ENCODE measurements at regions of chr1 and their contacts with region 1.

Region 1: GRCh38 chr1:46724991-46725735 is 6.2 kb upstream of the EFCAB14 start:
- DNase-seq: peak in 8 of 10 donors; percentile 52 to 80 (median 68)
- H3K4me3 ChIP-seq: peak overlapping the region in 1 of 59 donors; percentile 13
- H3K27ac ChIP-seq: no peak overlapping the region
- H3K27me3 ChIP-seq: peaks cover 0 to 14% (median 0%) of the 10 kb centered on the region in 45 donors
- CTCF ChIP-seq: peak; percentile 52 to 89 (median 78)

Region 2: DNA sequence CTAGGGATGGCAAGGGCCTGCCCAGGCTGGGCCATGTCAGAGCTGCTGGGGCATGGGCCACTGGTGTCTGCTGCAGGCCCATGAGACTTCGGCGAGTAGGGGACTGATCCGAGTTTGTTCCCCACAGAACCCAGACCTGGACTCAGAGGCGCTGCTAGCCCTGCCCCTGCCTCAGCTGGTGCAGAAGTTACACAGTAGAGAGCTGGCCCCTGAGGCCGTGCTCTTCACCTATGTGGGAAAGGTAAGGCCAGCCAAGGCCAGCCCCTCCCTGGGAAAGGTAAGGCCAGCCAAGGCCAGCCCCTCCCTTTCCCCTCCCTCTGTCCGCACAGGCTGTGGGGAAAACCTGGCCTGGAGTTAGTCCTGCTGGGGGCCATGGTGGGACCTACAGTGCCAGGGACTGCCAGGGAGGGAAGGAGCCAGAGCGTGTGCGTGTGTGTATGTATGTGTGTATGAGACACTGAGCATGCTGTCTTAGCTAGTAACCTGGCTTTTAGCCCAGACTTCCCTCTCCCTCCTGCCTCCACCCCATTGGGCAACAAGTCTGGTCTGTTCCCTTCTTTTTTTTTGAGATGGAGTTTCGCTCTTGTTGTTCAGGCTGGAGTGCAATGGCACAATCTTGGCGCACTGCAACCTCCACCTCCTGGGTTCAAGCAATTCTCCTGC is 323.1 kb before region 1 on chr1:
- intact Hi-C with region 1: loop called in 1 of 2 experiments (anchors 5 kb)
- DNase-seq: peak; percentile 68 to 94 (median 88)
- H3K4me3 ChIP-seq: peak overlapping the region in 54 of 59 donors; percentile 1 to 54 (median 32)
- H3K27ac ChIP-seq: peak overlapping the region; percentile 34 to 97 (median 90)
- H3K27me3 ChIP-seq: no peaks in the 10 kb centered on the region
- CTCF ChIP-seq: peak in 16 of 56 donors; percentile 6 to 42 (median 19)

Region 3: DNA sequence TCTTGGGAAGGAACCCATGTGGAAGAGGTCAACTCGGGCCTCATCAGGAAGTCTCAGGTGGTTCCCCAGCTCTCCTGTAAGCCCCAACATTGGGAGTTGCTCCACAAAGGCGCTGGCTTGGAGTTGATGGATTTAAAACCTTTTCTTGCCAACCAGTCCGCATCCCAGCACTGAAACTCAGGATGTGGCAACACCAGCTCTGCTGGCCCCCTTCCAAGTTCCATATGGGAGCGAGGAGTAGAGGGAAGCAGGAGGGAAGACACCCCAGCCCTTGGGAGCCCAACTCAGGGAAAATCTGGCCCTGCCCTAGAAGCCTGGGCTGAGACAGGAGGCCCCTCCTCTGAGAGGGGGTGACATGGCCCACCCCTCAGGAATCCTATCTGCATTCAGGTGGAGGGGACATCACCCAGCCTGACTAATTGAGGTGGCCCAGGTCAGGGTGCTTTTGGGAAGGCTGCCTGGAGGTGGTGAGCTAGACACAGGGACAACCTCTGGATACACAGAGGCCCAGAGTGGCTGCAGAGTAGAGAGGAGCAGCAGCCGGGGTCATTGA is 268.7 kb before region 1 on chr1:
- intact Hi-C with region 1: loop called in 1 of 2 experiments (anchors 10 kb)
- DNase-seq: no peak
- H3K4me3 ChIP-seq: no peak overlapping the region
- H3K27ac ChIP-seq: no peak overlapping the region
- H3K27me3 ChIP-seq: no peaks in the 10 kb centered on the region
- CTCF ChIP-seq: no peak

Region 4: DNA sequence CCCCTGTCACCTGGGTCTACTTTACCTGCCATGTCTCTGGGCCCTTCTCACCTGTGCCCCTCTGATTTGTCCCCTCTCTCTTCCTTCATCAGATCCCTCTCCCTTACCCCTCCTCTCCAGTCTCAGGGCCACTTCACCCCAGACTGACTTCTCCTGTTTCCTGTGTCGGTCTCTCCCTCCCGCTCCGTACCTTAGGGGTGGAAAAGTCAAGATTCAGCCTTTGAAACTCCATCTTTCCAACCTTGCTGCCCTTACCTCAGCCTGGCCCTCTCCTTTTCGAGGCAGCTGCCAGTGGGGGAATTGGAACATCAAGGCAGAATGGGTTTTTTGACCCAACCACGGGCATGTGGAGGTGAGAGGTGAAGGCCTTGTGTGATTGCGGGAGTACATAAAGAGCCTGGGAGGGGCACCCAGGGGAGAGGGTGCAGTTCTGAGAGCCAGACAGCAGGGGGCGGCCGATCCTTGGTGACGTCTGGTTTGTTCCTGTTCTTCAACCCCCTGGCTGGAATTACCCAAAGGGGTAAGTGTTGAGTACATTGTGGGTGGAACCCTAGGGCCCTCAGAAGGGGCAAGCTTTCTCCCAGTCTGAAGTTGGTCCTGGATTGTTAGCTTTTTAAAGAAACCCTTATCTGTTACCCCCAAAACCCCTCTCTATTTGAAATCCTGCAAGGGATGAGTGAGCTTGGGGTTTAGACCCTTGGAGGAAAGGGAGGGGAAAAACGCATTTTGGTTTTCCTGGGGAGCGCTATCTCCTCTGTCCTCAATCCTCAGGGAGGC is 247.8 kb before region 1 on chr1:
- intact Hi-C with region 1: loop called in 1 of 2 experiments (anchors 10 kb)
- DNase-seq: peak; percentile 59 to 84 (median 77)
- H3K4me3 ChIP-seq: no peak overlapping the region
- H3K27ac ChIP-seq: no peak overlapping the region
- H3K27me3 ChIP-seq: peaks cover 0 to 33% (median 0%) of the 10 kb centered on the region in 45 donors
- CTCF ChIP-seq: peak; percentile 46 to 95 (median 88)

Region 5: DNA sequence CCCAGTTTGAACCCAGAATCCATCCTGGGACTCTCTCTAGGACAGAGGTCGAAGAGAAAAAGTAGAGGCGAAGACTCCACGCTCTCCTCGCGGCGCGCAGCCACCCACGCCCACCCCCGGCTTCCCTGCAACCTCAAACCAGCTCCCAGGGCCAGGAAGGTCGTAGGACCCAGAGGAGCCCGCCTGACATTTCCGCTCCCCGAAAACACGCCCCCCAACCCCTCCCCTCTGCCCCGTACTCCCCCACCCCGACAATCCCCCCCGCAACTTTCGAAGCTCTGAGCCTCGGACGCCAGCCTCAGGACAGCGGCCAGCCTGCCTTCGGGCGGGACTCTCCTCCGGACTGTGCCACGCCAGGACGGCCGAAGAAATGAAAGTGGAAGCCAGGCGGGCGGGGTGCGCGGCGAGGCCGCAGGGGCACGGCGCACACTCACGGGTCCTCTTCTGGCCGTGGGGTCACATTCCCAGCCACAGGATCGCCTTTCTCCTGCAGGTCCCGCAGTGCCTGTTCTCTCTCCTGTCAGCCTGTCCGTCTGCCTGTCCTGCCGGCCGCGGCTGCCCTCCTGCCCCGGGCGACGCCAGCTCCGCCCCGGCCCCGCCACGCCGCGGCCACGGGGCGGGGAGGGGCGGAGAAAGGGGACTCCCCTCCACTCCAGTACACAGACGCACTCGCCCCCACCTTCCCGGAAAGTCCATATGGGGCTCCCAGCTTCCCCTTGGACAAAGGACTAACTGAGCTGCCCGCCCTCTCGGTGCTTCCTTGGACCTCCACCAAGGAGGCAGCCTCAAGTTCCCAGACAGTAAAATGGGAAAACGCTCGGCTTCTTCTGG is 108.7 kb before region 1 on chr1 and contains the start of gene MOB3C:
- intact Hi-C with region 1: loop called in 1 of 2 experiments (anchors 10 kb)
- DNase-seq: peak; percentile 51 to 86 (median 71)
- H3K4me3 ChIP-seq: peak within 1 kb of the TSS; percentile 67 to 98 (median 83)
- H3K27ac ChIP-seq: peak within 1 kb of the TSS in 58 of 59 donors; percentile 18 to 96 (median 83)
- H3K27me3 ChIP-seq: no peaks in the 10 kb centered on the region
- CTCF ChIP-seq: peak in 2 of 56 donors; percentile 7 to 10
- total RNA-seq, gene MOB3C: 5.7 to 25.1 (median 10.2) TPM

Region 6: GRCh38 chr1:46812065-46812963 is 87.2 kb after region 1 on chr1:
- intact Hi-C with region 1: no loop called
- DNase-seq: no peak
- H3K4me3 ChIP-seq: no peak overlapping the region
- H3K27ac ChIP-seq: no peak overlapping the region
- H3K27me3 ChIP-seq: peaks cover 0 to 4% (median 0%) of the 10 kb centered on the region in 45 donors
- CTCF ChIP-seq: no peak

Region 7: GRCh38 chr1:46948629-46949274 is 223.6 kb after region 1 on chr1:
- intact Hi-C with region 1: no loop called
- DNase-seq: no peak
- H3K4me3 ChIP-seq: no peak overlapping the region
- H3K27ac ChIP-seq: no peak overlapping the region
- H3K27me3 ChIP-seq: peaks cover 0 to 3% (median 0%) of the 10 kb centered on the region in 45 donors
- CTCF ChIP-seq: no peak

Region 8: GRCh38 chr1:47192458-47193384 is 467.6 kb after region 1 on chr1:
- intact Hi-C with region 1: no loop called
- DNase-seq: peak in 8 of 10 donors; percentile 53 to 76 (median 60)
- H3K4me3 ChIP-seq: no peak overlapping the region
- H3K27ac ChIP-seq: no peak overlapping the region
- H3K27me3 ChIP-seq: peaks cover 0 to 17% (median 0%) of the 10 kb centered on the region in 45 donors
- CTCF ChIP-seq: peak; percentile 76 to 97 (median 92)

Region 9: GRCh38 chr1:47478090-47478489 is 752.9 kb after region 1 on chr1:
- intact Hi-C with region 1: no loop called
- DNase-seq: no peak
- H3K4me3 ChIP-seq: no peak overlapping the region
- H3K27ac ChIP-seq: peak overlapping the region in 1 of 59 donors; percentile 51
- H3K27me3 ChIP-seq: peaks cover 0 to 6% (median 0%) of the 10 kb centered on the region in 45 donors
- CTCF ChIP-seq: no peak

Measured in dorsolateral prefrontal cortex (tissue), 120 donors.